ENCODE measurements at regions of chr5 and their contacts with region 1.

Region 1: GRCh38 chr5:177311723-177312648 is at the start of gene MXD3:
- DNase-seq: peak; percentile 98
- ATAC-seq: peak; percentile 93
- H3K4me3 ChIP-seq: peak within 1 kb of the TSS; percentile 29 to 36
- H3K27ac ChIP-seq: no peak within 1 kb of the TSS
- H3K4me1 ChIP-seq: no peaks in the 10 kb centered on the region
- H3K27me3 ChIP-seq: no peaks in the 10 kb centered on the region
- total RNA-seq, gene MXD3: 9.1 to 9.2 TPM

Region 2: DNA sequence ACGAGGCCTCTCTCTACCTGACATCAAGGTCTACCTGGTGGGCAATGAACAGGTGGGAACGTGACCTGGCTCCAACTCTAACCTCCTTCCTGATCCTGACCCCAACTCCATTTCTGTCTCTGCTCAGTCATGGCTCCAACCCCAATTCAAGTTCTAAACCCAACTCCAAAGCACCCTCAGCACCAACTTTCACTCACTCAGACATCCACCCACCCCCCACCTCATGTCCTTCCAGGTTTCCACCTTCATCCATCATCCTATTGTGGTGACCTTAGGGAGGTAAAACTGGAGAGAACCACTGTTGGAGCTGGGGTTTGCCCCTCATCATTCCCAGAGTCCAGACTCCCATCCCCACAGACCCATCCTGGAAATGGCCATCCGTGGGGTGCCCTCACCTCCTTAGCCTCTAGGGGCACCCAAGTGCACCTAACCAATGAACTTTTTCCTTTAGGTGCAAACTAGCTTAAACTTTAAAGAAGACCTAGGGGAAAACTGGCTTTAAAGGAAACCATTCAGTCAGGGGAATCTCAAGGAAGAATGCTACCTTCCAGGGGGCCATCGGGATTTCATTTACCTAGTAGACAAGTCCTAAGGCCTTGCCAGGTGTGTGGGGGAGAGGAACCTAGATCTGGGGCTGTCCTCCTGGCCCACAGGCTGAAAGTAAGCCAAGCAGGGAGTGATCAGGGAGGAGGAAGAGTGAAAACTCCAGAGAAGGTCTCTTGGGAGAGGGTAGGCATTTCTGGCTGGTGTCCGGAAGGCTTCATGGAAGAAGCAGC is 57.1 kb after region 1 on chr5:
- intact Hi-C with region 1: loop called in 1 of 2 experiments (anchors 5 kb)
- DNase-seq: no peak
- ATAC-seq: no peak
- H3K4me3 ChIP-seq: no peak overlapping the region
- H3K27ac ChIP-seq: no peak overlapping the region
- H3K4me1 ChIP-seq: no peaks in the 10 kb centered on the region
- H3K27me3 ChIP-seq: no peaks in the 10 kb centered on the region

Measured in aorta (tissue), 5 donors.